PC-9 (cell line): ENCODE measurements at regions of chr12 and their contacts with region 1.

Region 1: DNA sequence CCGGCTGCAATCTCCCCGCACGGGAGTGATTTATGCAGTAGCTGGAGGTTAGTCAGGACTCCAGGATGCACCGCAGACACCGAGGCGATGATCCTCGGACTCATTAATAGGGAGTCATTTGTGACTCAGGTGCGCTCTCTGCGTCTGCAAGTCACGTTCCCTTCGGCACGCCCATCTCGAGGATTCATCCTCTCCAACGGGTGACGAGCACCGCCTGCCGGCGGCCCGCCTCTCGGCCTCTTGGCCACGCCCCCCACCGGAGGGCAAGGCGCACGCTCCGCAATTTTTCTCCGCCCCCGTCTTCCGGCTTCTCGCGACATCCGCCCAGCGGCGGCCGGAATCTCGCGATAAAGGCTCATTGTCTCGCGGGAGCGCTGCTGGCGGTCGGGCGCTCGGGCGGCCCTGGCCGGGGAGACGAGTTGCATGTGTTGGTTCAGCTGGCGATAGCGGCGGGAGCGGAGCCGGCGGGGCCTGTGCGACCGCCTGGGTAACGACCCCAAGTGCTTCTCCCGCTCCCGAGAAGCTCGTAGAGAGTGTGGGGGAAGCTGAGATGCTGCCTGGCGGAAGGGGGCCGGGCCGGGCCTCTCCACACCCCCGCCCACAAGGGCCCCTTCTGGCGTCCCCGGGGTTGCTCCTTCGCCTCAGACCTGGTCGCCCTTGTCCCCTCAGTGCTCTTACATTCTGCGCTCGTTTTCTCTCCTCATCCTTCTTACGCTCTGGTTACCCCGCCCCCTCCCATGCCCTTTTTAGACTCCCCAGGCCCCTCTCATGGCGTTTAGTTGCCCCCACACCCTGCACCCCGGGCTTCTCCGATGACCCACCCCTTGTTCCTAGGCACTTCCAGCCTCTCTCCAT is at the start of gene DENR:
- DNase-seq: peak; percentile 96 to 99
- H3K4me3 ChIP-seq: peak within 1 kb of the TSS; percentile 86
- H3K27ac ChIP-seq: peak within 1 kb of the TSS; percentile 62
- H3K4me1 ChIP-seq: peaks cover 25% of the 10 kb centered on the region
- H3K27me3 ChIP-seq: no peaks in the 10 kb centered on the region
- CTCF ChIP-seq: peak; percentile 70
- total RNA-seq, gene DENR: 53.0 and 66.6 TPM in 2 replicates

Region 2: DNA sequence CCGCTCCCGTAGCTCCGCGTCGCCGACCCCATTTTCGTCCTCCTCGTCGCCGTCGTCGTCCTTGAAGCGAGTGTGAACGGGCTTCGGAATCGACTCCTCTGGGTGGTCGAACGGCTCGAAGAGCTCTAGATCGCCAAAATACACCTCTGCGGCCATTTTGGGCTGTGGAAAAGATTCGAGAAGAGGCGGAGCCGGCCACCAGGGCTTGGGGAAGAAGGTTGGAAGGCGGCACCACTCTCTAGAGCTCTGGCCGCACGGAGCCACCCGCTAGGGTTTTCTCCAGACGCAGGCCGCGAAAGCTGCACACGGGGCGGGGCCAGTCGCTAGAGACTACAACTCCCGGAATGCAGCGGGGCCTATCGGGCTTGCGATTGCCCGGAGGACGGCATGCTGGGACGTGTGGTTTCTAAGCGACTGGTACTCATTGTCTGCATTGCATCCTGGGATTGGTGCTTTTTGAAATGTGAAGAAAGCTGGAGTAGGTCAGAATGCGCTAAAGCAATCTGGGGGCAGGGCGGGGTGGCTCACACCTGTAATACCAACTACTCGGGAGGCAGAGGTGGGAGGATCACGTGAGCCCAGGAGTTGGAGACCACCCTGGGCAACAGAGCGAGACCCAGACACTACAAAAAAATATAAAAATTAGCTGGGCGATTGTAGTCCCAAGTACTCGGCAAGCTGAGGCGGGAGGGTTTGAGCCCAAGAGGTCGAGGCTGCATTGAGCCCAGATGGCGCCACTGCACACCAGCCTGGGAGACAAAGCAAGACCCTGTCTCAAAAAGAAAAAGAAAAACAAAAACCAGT is 251.8 kb before region 1 on chr12 and contains the start of gene ZCCHC8:
- CTCF ChIA-PET with region 1: no interaction called
- POLR2A ChIA-PET with region 1: no interaction called
- intact Hi-C with region 1: loop called (anchors 2 kb)
- DNase-seq: peak; percentile 94 to 95
- H3K4me3 ChIP-seq: peak within 1 kb of the TSS; percentile 86
- H3K27ac ChIP-seq: peak within 1 kb of the TSS; percentile 91
- H3K4me1 ChIP-seq: peaks cover 23% of the 10 kb centered on the region; the same call in 1 of the 2 replicates
- H3K27me3 ChIP-seq: no peaks in the 10 kb centered on the region
- CTCF ChIP-seq: no peak
- total RNA-seq, gene ZCCHC8: 16.7 and 24.3 TPM in 2 replicates

Region 3: DNA sequence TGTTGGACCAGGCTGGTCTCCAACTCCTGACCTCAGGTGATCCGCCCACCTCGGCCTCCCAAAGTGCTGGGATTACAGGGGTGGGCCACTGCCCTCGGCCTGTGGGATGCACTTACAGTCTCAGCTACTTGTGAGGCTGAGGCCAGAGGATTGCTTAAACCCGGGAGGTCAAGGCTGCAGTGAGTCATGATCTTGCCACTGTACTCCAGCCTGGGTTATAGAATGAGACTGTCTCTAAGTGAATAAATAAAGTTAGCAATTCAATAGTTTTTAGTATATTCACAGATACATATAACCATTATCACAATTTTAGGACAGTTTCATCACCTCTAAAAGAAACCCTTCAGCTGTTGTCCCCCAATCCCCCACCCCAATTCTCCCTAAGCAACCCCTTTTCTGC is 110.7 kb before region 1 on chr12:
- CTCF ChIA-PET with region 1: interaction called, 9 read pairs
- POLR2A ChIA-PET with region 1: interaction called, 3 read pairs
- intact Hi-C with region 1: loop called (anchors 1 kb)
- DNase-seq: no peak
- H3K4me3 ChIP-seq: no peak overlapping the region
- H3K27ac ChIP-seq: no peak overlapping the region
- H3K4me1 ChIP-seq: no peaks in the 10 kb centered on the region
- H3K27me3 ChIP-seq: no peaks in the 10 kb centered on the region
- CTCF ChIP-seq: no peak

Region 4: DNA sequence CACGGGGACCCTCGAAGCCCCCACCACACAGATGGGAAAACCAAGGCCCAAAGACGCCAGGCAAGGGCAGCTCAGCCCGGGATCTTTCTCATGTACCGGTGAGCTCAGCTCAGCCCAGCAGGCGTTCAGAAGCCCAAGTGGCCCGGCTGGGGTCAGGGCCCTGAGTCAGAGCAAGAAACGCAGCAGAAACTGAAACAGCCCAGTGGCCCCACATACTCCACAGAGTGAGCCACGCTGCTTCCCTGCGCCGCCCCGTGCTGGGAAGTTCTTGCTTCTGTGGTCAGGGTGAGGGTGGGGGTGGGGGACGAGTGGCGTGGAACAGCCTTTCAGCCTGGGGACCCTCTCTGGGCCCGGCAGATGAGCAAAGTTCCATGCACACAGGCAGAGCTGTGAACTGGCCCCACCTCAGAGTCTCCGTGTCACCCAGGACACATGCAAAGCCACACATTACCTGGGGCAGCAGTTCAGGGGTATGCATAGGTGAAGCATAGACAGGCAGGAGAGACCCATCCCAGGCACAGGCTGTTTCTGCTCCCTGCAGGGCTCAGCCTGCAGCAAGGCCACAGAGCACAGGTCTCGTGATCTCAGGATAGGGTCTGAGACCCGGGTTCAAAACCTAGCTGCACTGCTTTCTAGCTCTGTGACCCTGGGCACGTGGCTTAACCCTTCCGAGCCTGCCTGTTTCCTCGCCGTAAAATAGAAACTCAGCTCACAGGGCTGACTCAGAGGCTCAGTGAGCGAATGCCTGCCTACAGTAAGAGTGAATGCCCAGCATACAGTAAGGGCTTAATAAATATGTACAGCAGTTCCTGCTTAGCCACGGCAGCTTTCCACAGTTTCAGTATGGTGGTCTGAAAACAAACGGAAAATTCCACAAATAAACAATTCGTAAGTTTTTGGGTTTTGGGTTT is 1793.1 kb after region 1 on chr12:
- CTCF ChIA-PET with region 1: no interaction called
- POLR2A ChIA-PET with region 1: no interaction called
- intact Hi-C with region 1: no loop called
- DNase-seq: no peak
- H3K4me3 ChIP-seq: no peak overlapping the region
- H3K27ac ChIP-seq: no peak overlapping the region
- H3K4me1 ChIP-seq: peaks cover 42% of the 10 kb centered on the region
- H3K27me3 ChIP-seq: no peaks in the 10 kb centered on the region
- CTCF ChIP-seq: no peak